ENCODE measurements at regions of chr14 and their contacts with region 1.

Region 1: DNA sequence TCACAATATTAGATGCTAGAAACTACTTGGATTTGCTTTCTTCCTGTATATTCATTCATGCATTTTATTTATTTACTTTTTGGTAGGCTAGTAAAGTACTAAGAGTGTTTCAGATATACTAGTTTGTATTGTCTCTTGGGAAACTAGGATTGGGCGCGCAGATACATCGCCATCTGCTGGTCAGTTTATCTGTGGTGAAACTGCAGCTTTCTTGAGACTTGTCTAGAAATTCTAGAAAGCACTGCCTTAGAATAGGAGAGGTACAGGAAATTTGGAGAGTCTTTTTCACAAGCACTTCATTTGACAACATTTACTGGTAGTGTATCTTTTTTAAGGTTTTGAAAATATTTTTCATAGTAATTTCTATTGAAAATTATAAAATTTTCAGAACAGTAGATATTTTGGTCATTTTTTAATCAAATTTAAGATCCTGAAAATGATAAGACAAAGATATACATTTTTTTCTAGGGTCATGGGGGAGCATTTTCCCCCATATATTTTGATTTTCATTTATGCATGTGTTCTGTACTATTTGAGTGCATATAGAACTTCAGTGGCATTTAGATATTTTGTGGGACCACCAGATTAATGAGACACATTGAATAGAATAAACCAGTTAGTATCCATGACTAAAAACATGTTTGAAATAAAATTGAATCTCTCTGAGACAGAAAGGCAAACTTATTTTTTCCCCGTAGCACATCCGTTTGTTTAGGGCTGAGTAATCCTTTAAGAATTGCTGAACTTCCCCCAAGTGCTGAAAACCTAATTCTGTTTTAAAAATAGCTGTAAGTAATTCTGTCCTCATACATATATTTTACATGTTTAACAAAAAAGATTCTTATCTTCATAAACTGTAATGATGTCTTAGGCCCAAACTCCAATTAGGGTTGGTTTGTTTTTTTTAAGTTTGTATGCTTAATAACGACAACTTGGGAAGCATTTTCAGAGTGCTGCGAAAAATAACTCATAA is 44.5 kb downstream of the SLC38A6 start:
- DNase-seq: peak; percentile 40
- ATAC-seq: peak; percentile 49 to 59

Region 2: DNA sequence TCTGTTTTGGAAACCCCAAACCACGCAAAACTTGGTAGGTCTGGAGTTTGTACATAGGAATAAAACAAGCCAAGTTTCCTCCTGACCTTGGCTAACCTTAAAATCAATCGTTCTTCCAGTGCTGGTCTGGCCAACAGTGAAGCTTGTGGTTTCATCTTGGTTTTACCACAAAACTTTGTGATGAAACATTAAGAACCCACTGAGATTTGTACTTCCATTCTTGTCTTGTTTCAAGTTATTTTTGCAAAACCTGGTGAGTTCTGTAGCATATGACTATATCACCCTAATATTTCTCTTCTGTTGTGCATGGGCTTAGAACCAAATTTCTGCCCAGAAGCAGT is 402.6 kb before region 1 on chr14:
- intact Hi-C with region 1: loop called (anchors 2 to 5 kb)
- DNase-seq: no peak
- ATAC-seq: peak in 1 of 2 donors; percentile 75

Region 3: GRCh38 chr14:60628892-60629291 is 396.6 kb before region 1 on chr14:
- intact Hi-C with region 1: loop called (anchors 2 to 5 kb)
- DNase-seq: no peak
- ATAC-seq: no peak

Region 4: DNA sequence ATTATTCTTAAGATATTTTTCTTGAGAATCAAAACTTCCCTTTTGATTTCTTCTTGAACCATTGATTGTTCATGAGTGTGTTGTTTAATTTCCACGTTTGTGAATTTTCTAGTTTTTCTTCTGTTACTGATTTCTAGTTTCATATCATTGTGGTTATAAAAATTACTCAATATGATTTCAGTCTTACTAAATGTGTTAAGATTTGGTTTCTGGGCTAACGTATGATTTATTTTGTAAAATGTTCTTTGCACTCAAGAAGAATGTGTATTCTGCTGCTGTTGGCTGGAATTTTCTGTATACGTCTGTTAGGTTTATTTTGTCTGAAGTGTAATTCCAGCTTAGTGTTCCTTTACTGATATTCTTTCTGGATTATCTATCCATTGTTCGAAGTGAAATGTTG is 69.3 kb before region 1 on chr14:
- intact Hi-C with region 1: no loop called
- DNase-seq: no peak
- ATAC-seq: no peak

Region 5: GRCh38 chr14:61076556-61076955 is 51.0 kb after region 1 on chr14:
- intact Hi-C with region 1: no loop called
- DNase-seq: no peak
- ATAC-seq: no peak

Measured in left cardiac atrium (tissue), 4 donors.